Right ventricle myocardium inferior (tissue), 1 donor: ENCODE measurements at regions of chr5 and their contacts with region 1.

Region 1: GRCh38 chr5:137836997-137837396 is 30.7 kb upstream of the MYOT start:
- DNase-seq: no peak
- ATAC-seq: peak; percentile 88

Region 2: DNA sequence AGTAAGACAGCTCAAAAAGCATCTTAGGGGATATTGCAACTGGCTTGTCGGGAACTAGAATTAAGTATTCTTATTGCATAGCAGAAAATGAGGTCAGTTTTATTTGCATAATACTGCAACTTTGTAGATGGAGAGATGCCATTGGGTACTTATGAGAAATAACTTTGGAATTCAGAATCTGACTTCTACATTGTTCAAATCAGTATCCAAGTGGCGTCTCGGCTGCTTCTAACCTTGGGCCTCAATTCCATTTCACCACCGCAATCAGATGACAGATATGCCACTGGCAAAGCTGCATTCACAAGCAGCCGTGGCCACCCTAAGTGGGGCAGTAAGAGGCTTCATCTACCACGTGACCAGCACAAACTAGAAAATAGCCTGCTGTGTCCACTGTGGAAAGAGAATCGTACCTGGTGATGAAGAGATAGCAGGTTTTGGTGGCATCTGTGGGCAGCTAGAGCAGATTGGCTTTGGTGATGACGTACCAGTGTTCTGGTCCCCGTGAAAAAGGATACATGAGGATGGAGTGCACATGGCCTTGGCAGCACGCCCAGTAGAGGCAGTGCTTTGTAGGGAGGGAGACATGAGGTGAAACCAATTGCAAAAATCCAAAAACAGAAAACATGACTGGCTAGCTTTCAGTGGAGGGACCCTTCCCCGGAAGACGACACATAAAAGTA is 217.7 kb before region 1 on chr5:
- intact Hi-C with region 1: no loop called
- DNase-seq: peak; percentile 84
- ATAC-seq: peak; percentile 38

Region 3: DNA sequence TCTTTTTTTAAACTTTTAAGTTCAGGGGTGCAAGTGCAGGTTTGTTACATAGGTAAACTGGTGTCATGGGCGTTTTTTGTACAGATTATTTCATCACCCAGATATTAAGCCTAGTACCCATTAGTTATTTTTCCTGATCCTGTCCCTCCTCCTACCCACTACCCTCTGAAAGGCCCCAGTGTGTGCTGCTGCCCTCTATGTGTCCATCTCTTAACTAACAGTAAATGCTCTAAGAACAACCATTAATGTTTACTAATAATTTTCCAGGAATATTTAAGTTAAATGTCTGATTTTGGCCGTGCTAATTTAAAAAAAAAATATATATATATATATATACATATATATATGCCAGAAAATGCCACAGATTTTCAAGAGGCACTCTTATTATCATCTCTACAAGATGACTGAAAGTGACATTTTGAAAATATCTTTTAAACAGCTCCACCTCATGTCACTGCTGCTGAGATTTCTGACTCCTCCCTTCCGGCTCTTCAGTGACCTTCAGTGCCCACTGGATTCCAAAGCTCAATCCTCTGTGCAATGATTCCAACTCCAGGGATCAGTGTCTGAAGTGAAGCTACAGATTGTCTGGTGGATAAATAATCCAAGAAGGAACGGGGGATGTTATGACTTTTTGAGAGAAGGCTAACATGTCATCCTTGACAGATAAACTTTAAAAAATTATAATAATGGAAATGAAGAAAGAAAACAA is 36.1 kb before region 1 on chr5:
- intact Hi-C with region 1: loop called (anchors 5 kb)
- DNase-seq: no peak
- ATAC-seq: peak; percentile 70

Region 4: GRCh38 chr5:137888857-137889759 is 52.1 kb after region 1 on chr5 and contains the start of gene PKD2L2:
- intact Hi-C with region 1: loop called (anchors 2 kb)
- DNase-seq: peak; percentile 94
- ATAC-seq: peak; percentile 98
- total RNA-seq, gene PKD2L2: 0.81 TPM